ENCODE measurements at regions of chr5 and their contacts with region 1.

Region 1: DNA sequence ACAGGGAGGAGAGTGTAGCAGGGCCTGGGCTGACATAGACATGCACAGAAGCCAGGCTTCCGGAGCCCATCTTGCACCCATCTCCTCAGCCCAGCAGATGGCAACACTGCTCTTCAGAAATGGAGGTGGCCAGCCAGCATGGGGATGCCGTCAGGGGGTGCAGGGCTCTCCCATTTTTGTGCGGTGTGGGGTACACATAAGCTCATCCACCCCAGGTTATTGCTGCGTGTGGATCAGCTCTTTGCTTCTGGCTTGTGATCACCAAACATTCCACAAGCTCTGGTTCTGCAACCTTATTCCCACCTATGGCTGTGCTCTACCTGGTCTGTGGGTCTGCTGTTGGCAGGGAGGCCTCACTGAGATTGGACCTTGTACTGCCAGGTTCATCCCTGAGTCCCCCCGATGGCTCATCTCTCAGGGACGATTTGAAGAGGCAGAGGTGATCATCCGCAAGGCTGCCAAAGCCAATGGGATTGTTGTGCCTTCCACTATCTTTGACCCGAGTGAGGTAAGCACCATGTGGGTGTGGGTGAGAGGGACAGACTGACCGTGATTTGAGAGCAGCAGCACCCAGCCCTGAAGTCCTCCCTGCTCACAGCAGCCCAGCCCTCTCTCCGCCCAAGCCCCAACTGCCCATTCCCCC is 17.3 kb downstream of the SLC22A5 start:
- DNase-seq: peak in 1 of 2 experiments; percentile 81
- H3K4me3 ChIP-seq: no peak overlapping the region
- H3K27ac ChIP-seq: no peak overlapping the region
- H3K4me1 ChIP-seq: peaks cover 0 to 9% (median 3%) of the 10 kb centered on the region in 4 experiments; a peak in 4 of 7 replicates
- H3K27me3 ChIP-seq: no peaks in the 10 kb centered on the region
- CTCF ChIP-seq: peak; percentile 84 to 90 (median 86)
- EP300 ChIP-seq: no peak
- POLR2A ChIP-seq: no peak
- RAD21 ChIP-seq: peak; percentile 92 to 93

Region 2: DNA sequence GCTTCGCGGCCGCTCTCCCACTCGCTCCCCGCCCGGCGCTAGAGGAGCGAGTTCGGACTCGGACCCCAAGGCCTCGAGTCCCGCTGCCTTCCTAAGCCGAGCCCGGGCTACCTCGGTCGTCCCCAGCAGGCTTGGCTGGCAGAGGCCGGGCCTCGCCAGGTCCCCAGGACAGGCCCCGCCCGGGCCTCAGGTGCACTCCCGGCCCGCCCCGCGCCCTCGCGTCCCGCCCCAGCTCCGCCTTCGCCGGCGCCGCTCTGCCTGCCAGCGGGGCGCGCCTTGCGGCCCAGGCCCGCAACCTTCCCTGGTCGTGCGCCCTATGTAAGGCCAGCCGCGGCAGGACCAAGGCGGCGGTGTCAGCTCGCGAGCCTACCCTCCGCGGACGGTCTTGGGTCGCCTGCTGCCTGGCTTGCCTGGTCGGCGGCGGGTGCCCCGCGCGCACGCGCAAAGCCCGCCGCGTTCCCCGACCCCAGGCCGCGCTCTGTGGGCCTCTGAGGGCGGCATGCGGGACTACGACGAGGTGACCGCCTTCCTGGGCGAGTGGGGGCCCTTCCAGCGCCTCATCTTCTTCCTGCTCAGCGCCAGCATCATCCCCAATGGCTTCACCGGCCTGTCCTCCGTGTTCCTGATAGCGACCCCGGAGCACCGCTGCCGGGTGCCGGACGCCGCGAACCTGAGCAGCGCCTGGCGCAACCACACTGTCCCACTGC is 17.1 kb before region 1 on chr5 and contains the start of gene SLC22A5:
- CTCF ChIA-PET with region 1: interaction called, 23 read pairs
- POLR2A ChIA-PET with region 1: interaction called, 3 read pairs
- DNase-seq: peak; percentile 41 to 86
- H3K4me3 ChIP-seq: peak within 1 kb of the TSS; percentile 47 to 72 (median 60)
- H3K27ac ChIP-seq: no peak within 1 kb of the TSS
- H3K4me1 ChIP-seq: peaks cover 0 to 4% (median 2%) of the 10 kb centered on the region in 4 experiments; a peak in 2 of 7 replicates
- H3K27me3 ChIP-seq: peaks cover 0 to 18% (median 8%) of the 10 kb centered on the region in 4 experiments; a peak in 5 of 7 replicates
- CTCF ChIP-seq: no peak
- EP300 ChIP-seq: no peak
- POLR2A ChIP-seq: peak in 1 of 2 experiments; percentile 30; a peak in 2 of 3 replicates
- RAD21 ChIP-seq: no peak
- total RNA-seq, gene SLC22A5: 2.7 and 4.0 TPM in 2 replicates

Region 3: DNA sequence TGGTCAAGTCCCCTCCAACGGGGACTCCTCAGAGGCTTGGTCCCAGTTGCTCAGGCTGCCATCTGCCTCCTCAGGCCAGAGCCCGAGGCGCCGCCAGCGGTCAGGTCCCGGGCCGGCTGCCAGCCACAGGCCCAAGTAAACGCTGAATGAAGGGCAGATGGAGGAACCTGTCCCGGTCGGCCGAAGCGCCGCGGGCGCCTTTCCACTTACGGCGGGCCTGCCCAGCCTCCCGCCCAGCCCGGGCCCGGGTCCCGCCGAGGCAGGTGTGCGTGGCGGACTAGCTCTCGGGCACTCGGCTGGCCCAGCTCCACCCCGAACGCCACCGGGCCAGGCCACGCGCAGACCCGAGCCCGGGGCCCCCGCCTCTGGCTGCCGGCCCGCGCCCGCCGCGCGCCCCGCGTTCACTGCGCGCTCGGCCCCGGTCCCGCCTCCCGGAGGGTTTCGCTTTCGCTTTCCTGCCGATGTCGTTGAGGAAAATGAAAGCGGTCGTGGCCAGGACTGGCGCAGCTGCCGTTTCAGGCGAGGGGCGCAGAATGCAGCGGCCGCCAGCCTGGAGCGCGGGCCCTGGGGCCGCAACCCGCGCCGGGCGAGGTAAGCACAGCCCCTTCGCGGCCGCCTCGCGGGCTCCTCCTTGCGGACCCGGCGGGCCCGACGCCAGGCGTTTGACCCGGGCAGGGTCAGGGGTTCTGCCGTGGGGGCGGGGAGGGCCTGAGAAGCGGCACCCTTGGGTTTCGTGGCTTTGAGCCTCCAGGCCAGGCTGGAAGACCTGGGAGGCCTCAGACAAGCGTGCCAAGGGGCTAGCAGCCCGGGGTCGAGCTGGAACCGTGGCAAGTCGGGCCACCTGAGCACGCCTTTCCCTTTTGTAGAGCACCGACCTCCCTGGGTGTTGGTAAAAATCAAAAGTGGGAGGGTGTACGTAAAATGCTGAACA is 24.0 kb after region 1 on chr5:
- CTCF ChIA-PET with region 1: interaction called, 28 read pairs
- POLR2A ChIA-PET with region 1: interaction called, 4 read pairs
- DNase-seq: peak in 1 of 2 experiments; percentile 91
- H3K4me3 ChIP-seq: peak overlapping the region; percentile 36 to 79 (median 58)
- H3K27ac ChIP-seq: peak overlapping the region; percentile 40; the same call in 1 of the 2 replicates
- H3K4me1 ChIP-seq: peaks cover 0 to 4% (median under 1%) of the 10 kb centered on the region in 4 experiments; a peak in 3 of 7 replicates
- H3K27me3 ChIP-seq: 0 out of 7 replicates have a peak, but pooled peaks cover 0 to 3% (median 0%) of the 10 kb centered on the region in 4 experiments
- CTCF ChIP-seq: peak; percentile 68 to 88 (median 82)
- EP300 ChIP-seq: no peak
- POLR2A ChIP-seq: peak in 1 of 2 experiments; percentile 55; a peak in 2 of 3 replicates
- RAD21 ChIP-seq: peak; percentile 61 to 78

Measured in H1 (cell line).